Transverse colon (tissue), 4 donors: ENCODE measurements at regions of chr6 and their contacts with region 1.

Region 1: GRCh38 chr6:108667993-108668392 is 107.3 kb downstream of the FOXO3 start:
- DNase-seq: no peak
- H3K4me3 ChIP-seq: no peak overlapping the region
- H3K27ac ChIP-seq: no peak overlapping the region
- H3K4me1 ChIP-seq: peaks cover 25 to 54% (median 41%) of the 10 kb centered on the region in 4 donors
- H3K27me3 ChIP-seq: no peaks in the 10 kb centered on the region
- CTCF ChIP-seq: no peak
- EP300 ChIP-seq: no peak
- POLR2A ChIP-seq: no peak

Region 2: GRCh38 chr6:107832151-107833056 is 835.6 kb before region 1 on chr6:
- in situ Hi-C with region 1: no loop called
- intact Hi-C with region 1: loop called (anchors 5 kb)
- DNase-seq: no peak
- H3K4me3 ChIP-seq: no peak overlapping the region
- H3K27ac ChIP-seq: no peak overlapping the region
- H3K4me1 ChIP-seq: no peaks in the 10 kb centered on the region
- H3K27me3 ChIP-seq: no peaks in the 10 kb centered on the region
- CTCF ChIP-seq: no peak
- EP300 ChIP-seq: no peak
- POLR2A ChIP-seq: no peak

Region 3: GRCh38 chr6:108510461-108511319 is 157.3 kb before region 1 on chr6:
- in situ Hi-C with region 1: no loop called
- intact Hi-C with region 1: no loop called
- DNase-seq: no peak
- H3K4me3 ChIP-seq: no peak overlapping the region
- H3K27ac ChIP-seq: no peak overlapping the region
- H3K4me1 ChIP-seq: no peaks in the 10 kb centered on the region
- H3K27me3 ChIP-seq: no peaks in the 10 kb centered on the region
- CTCF ChIP-seq: no peak
- EP300 ChIP-seq: no peak
- POLR2A ChIP-seq: no peak